ENCODE measurements at regions of chr15 and their contacts with region 1.

Region 1: DNA sequence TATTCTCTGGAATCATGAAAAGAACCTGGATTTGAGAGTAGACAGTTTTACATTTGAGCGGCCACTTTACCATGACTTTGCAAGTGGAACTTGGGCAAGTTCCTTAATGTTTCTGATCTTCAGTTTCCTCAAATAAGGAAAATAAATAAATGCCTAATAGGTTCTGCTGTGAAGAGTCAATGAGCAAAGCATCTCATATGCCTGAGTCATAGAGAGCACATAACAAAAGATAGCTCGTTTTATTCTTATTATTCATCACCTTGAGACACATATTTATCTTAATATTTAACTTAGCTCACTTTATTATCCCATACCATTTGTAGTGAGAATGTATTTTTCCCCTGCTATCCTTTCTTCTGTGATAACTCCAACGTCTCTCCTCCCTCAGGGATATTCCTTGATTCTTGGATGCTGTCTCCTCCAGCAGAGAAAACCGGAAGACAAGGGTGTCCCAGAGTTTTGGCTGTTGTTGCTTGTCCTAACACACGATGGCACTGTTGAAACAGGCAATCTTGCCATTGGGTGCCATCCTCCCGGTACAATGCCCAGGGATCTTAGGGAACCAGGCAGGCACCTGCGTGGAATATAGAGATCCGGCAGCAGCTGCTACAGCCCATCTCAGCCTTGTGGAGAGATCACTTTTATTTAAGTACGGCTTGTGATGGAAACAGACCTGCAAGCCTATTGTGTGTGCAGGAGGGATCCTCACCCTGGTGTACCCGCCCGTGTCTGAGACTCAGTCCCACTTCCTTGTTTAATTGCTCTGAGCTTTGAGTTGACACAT is 33.3 kb upstream of the VPS33B start:
- DNase-seq: peak; percentile 69
- ATAC-seq: peak; percentile 84

Region 2: GRCh38 chr15:91075739-91076138 is 20.0 kb after region 1 on chr15:
- intact Hi-C with region 1: no loop called
- DNase-seq: no peak
- ATAC-seq: no peak

Region 3: DNA sequence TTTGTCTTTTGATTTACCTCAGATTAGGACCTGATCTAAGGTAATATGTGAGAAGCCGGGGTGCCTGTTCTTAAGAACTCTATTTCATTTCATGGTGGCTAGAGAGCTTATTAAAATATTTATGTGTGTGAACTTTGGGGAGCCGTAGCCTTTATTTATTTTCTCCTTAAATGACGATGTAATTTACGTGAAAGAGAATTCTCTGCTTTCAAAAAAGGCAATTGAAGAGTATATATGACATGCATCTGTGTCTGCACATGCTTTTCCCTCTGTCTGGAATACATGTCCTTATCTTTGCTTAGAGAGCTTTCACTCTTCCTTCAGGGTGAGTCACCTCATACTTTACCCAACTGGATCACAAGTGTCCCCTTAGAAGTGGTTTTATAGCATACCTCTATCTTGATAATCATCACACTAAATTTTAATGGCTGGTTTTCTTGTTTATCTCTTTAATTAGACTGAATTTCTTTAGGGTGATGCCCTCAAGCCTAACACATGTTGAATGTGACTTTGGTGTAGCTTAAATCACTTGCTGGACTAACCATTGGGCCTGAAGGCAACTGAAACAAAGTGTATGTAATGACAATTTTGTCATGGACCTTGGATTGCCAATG is 223.2 kb after region 1 on chr15:
- intact Hi-C with region 1: loop called (anchors 5 kb)
- DNase-seq: no peak
- ATAC-seq: no peak

Measured in sciatic nerve (tissue), 2 donors.